Left colon (tissue), 2 donors: ENCODE measurements at regions of chr1 and their contacts with region 1.

Region 1: DNA sequence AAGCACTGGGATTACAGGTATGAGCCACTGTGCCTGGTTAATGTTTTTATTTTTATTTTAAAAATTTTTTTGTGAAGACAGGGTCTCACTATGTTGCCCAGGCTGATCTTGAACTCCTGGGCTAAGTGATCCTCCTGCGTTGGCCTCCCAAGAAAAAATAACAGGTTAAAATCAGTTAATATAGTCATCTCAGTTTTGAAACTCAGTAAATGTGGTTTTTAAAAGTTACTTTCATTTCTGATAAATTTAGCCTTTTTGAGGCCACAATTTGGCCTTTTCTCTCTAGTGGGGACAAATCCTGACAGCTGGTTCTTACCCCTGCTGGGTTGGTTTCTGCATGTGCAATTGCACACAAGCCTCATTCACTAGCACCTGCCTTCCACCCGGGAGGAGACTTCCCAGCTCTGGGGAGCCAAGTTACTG is 13.3 kb downstream of the PMF1 start:
- DNase-seq: no peak
- ATAC-seq: no peak

Region 2: GRCh38 chr1:156090822-156091188 is 135.3 kb before region 1 on chr1:
- intact Hi-C with region 1: loop called (anchors 2 to 5 kb)
- DNase-seq: peak; percentile 82 to 93
- ATAC-seq: peak; percentile 82

Region 3: DNA sequence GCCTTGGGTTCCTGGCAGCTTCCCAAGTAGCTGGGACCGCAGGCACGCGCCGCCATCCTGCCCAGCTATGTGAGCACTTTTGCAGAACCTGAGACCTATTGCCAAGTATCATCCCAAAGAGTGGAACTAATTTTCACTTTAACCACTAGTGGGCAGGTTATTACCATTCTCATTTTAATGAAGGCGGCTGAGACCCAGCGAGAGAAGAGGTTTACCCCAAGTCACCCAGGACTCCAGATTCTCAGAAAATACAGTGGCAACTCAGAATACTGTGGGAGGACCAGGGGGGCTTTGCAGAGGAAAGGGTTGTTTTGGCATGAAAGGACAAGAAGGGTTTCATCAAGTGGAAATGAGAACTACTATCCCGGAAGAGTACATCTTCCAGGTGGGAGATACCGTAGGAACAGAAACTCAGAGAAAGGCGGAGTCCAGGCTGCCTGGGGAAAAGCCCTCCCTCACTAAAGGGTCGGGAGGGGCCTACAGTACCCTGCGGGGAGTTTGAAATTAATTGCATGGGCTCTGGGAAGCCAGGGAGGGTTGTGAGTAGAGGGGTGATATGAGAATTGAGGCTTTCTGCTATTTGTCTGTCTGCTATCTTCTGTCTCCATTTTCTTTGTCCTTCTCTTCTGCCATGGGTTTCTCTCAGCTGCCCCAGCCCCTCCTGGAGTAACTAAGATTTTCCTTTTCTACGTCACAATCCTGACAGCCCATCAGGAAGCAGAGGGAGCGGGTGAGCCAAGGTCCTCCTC is 79.9 kb before region 1 on chr1:
- intact Hi-C with region 1: loop called (anchors 5 kb)
- DNase-seq: peak; percentile 66
- ATAC-seq: peak; percentile 78

Region 4: GRCh38 chr1:156282479-156283222 is 56.5 kb after region 1 on chr1 and contains the start of gene SMG5:
- intact Hi-C with region 1: no loop called
- DNase-seq: peak; percentile 95 to 99
- ATAC-seq: peak; percentile 87
- total RNA-seq, gene SMG5: 65.3 to 73.9 TPM

Region 5: GRCh38 chr1:156383023-156383422 is 156.9 kb after region 1 on chr1:
- intact Hi-C with region 1: no loop called
- DNase-seq: peak in 1 of 2 donors; percentile 65
- ATAC-seq: peak; percentile 91